Activated B cell treated with CpG ODN at 0.5 μM for 24 hours (primary cell): ENCODE measurements at regions of chr20 and their contacts with region 1.

Region 1: GRCh38 chr20:36861875-36862801 is 13.8 kb upstream of the TLDC2 start:
- DNase-seq: no peak
- ATAC-seq: no peak
- H3K4me3 Mint-ChIP-seq: peak overlapping the region; percentile 78
- H3K27ac Mint-ChIP-seq: peak overlapping the region; percentile 35
- H3K4me1 Mint-ChIP-seq: peaks cover 76% of the 10 kb centered on the region
- H3K27me3 Mint-ChIP-seq: no peaks in the 10 kb centered on the region
- CTCF ChIP-seq: no peak

Region 2: GRCh38 chr20:36745927-36746659 is 116.0 kb before region 1 on chr20 and contains the start of gene NDRG3:
- CTCF ChIA-PET with region 1: interaction called, 5 read pairs
- POLR2A ChIA-PET with region 1: no interaction called
- intact Hi-C with region 1: loop called (anchors 2 kb)
- DNase-seq: peak; percentile 84
- ATAC-seq: peak; percentile 98
- H3K4me3 Mint-ChIP-seq: peak within 1 kb of the TSS; percentile 87
- H3K27ac Mint-ChIP-seq: peak within 1 kb of the TSS; percentile 88
- H3K4me1 Mint-ChIP-seq: peaks cover 16% of the 10 kb centered on the region
- H3K27me3 Mint-ChIP-seq: no peaks in the 10 kb centered on the region
- CTCF ChIP-seq: no peak
- total RNA-seq, gene NDRG3: 20.8 and 21.4 TPM in 2 replicates

Region 3: DNA sequence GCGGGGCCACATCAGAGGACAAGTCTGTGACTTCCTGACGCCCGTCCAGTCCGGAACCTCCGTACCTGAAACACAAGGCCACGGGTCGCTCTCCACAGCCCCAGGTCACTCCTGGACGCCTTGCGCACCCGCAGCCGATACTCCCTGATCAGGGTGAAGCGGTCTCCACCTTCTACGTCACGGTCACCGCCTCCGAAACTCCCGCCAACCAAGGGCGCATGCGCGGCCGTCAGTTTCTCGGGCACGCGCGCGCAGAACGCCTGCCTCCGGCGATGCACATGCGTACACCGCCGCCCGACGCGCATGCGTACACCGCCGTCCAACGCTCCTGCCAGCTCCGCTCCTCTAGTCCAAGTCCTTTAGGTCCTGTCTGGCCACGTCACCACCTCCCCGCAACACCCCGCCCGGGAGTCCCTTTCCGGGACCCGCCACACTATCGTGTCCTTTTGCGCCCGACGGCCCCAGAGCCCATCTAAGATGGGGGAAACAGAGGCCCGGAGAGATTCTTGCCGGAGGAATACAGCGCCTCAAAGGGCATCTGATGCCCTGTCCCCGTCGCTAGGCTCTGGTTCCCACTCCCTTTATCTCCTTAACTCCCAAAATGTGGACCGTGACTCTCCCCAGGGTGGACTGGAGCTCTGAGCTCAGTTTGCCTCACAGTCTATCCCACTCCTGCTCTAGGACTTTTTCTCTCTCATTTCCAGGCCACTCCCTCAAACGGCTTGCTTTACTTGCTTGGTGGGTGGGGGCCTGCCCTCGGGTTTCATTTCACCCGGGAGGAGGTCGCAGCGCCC is 88.3 kb before region 1 on chr20 and contains the start of gene DSN1:
- CTCF ChIA-PET with region 1: interaction called, 12 read pairs
- POLR2A ChIA-PET with region 1: interaction called, 8 read pairs
- intact Hi-C with region 1: loop called (anchors 1 kb)
- DNase-seq: peak; percentile 99
- ATAC-seq: peak; percentile 87
- H3K4me3 Mint-ChIP-seq: peak within 1 kb of the TSS; percentile 91
- H3K27ac Mint-ChIP-seq: peak within 1 kb of the TSS; percentile 94
- H3K4me1 Mint-ChIP-seq: peaks cover 35% of the 10 kb centered on the region
- H3K27me3 Mint-ChIP-seq: peaks cover 2% of the 10 kb centered on the region
- CTCF ChIP-seq: no peak
- total RNA-seq, gene DSN1: 11.2 and 14.0 TPM in 2 replicates

Region 4: GRCh38 chr20:36808317-36809257 is 53.6 kb before region 1 on chr20:
- CTCF ChIA-PET with region 1: interaction called, 37 read pairs
- POLR2A ChIA-PET with region 1: interaction called, 4 read pairs
- intact Hi-C with region 1: loop called (anchors 1 kb)
- DNase-seq: peak; percentile 62
- ATAC-seq: peak; percentile 71
- H3K4me3 Mint-ChIP-seq: no peak overlapping the region
- H3K27ac Mint-ChIP-seq: peak overlapping the region; percentile 35
- H3K4me1 Mint-ChIP-seq: peaks cover 3% of the 10 kb centered on the region
- H3K27me3 Mint-ChIP-seq: no peaks in the 10 kb centered on the region
- CTCF ChIP-seq: peak; percentile 71

Region 5: DNA sequence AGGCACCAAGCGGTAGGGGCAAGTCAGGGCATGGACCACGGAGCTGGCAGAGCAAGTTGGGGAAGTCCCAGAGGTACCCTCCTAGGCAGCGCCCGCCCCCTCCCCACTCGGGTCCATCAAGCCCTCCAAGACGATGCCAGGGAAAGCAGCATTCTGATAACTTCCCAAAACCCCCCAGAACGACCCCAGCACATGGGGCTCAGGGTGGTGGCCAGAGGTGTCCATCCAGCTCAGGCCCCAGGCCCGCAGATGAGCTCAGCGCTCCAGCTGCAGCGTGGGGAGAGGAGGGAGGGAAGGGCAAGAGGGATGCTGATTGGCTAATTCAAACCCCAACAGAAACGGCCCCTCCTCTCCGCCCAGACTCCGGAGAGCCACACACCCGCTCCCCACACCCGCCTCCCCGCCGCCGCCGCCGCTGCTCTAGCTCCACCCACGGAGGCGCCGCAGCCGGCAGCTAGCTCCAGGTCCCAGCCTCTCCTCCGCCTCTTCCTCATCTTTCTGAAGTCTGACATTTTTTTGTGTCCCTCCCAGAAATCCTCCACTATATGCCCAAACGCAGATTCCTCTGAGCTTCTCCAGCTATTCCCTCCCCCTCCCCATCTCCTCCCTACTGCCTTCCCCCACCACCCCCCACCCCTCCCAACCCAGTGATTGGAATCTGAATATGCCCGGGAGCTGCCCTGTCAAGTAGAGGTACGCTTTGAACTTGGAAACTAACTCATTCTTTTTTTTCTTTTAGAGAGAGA is 26.5 kb before region 1 on chr20:
- CTCF ChIA-PET with region 1: interaction called, 37 read pairs
- POLR2A ChIA-PET with region 1: interaction called, 44 read pairs
- intact Hi-C with region 1: loop called (anchors 1 kb)
- DNase-seq: peak; percentile 72
- ATAC-seq: peak; percentile 92
- H3K4me3 Mint-ChIP-seq: peak overlapping the region; percentile 79
- H3K27ac Mint-ChIP-seq: peak overlapping the region; percentile 74
- H3K4me1 Mint-ChIP-seq: peaks cover 49% of the 10 kb centered on the region
- H3K27me3 Mint-ChIP-seq: no peaks in the 10 kb centered on the region
- CTCF ChIP-seq: no peak